ENCODE measurements at regions of chr15 and their contacts with region 1.

Region 1: DNA sequence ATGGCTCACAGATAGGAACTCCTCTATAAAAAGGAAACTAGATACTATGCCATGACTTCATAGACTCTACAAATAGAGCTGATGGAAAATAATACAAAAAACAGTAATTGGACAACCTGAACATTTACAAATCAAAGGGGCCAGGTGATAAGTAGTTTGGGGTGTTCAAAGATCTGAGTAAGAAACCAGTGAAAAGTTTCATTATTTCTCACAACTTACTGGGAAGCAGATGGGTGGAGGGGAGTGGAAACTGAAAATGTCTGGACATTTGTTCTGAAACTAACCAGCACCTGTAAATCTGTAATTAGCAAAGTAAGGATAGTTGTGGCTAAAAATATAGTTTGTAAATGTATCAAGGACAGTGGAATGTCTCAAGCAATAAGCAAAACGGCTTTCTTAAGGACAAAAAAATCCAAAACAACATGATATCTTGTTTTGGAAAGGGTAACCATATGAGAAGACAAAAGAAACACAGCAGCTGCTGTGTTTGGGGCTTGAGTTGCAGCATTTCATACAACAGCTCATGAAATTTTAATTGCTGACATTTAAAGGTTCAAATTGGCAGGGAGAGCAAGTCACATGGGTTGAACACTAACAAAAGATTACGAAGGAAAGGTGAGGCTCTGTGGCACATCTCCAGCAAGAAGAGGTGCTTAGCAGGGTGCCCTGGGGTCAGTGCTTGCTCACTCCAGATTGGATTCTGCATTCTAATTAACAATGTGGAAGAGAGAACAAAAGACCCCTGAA is 26.8 kb upstream of the THBS1 start:
- DNase-seq: peak; percentile 58
- H3K4me3 ChIP-seq: no peak overlapping the region
- H3K27ac ChIP-seq: peak overlapping the region in 3 of 4 donors; percentile 10 to 56 (median 46)
- H3K4me1 ChIP-seq: peaks cover 0 to 20% (median 12%) of the 10 kb centered on the region in 4 donors
- H3K27me3 ChIP-seq: no peaks in the 10 kb centered on the region
- CTCF ChIP-seq: no peak
- EP300 ChIP-seq: no peak
- POLR2A ChIP-seq: no peak

Region 2: DNA sequence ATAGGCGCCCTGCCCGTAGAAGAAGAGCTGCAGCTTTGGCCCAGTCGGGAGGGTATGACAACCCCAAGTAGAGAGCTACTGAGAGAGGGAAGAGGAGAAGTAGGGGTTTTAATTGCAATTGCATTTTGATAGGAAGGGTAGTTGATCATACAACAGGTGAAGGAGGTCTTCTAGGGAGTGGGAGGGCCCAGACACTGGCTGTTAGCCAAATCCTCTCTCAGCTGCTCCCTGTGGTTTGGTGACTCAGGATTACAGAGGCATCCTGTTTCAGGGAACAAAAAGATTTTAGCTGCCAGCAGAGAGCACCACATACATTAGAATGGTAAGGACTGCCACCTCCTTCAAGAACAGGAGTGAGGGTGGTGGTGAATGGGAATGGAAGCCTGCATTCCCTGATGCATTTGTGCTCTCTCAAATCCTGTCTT is 382.2 kb before region 1 on chr15:
- in situ Hi-C with region 1: loop called in 1 of 4 experiments (anchors 25 kb)
- intact Hi-C with region 1: no loop called
- DNase-seq: peak; percentile 41
- H3K4me3 ChIP-seq: no peak overlapping the region
- H3K27ac ChIP-seq: peak overlapping the region; percentile 66 to 79 (median 70)
- H3K4me1 ChIP-seq: peaks cover 2 to 15% (median 9%) of the 10 kb centered on the region in 4 donors
- H3K27me3 ChIP-seq: no peaks in the 10 kb centered on the region
- CTCF ChIP-seq: peak in 4 of 5 experiments; percentile 12 to 55 (median 32)
- EP300 ChIP-seq: no peak
- POLR2A ChIP-seq: no peak

Region 3: DNA sequence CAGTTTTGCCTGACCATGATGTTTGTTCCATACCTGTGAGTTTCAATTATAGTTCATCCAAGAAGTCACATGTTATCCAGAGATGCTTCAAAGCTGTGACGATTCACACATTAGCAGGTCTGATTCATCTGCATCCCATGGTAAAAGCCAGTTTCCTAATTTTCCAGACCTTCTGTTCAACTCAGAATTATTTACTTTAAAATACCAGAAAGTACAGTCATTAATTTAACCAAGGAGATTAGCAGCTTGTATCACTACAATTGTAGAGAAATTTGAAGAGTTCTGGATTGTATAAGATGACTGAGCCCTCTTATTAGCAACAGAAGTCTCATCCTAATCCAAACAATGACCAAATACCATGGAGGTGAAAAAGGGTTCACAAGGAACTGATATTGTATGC is 49.3 kb before region 1 on chr15:
- in situ Hi-C with region 1: no loop called
- intact Hi-C with region 1: loop called (anchors 10 kb)
- DNase-seq: no peak
- H3K4me3 ChIP-seq: no peak overlapping the region
- H3K27ac ChIP-seq: peak overlapping the region in 2 of 4 donors; percentile 36 to 39
- H3K4me1 ChIP-seq: no peaks in the 10 kb centered on the region
- H3K27me3 ChIP-seq: no peaks in the 10 kb centered on the region
- CTCF ChIP-seq: no peak
- EP300 ChIP-seq: no peak
- POLR2A ChIP-seq: no peak